ENCODE measurements at regions of chr7 and their contacts with region 1.

Region 1: GRCh38 chr7:80740778-80741545 is 102.5 kb downstream of the CD36 start:
- DNase-seq: peak; percentile 77
- H3K4me3 ChIP-seq: no peak overlapping the region
- H3K27me3 ChIP-seq: no peaks in the 10 kb centered on the region
- CTCF ChIP-seq: no peak

Region 2: DNA sequence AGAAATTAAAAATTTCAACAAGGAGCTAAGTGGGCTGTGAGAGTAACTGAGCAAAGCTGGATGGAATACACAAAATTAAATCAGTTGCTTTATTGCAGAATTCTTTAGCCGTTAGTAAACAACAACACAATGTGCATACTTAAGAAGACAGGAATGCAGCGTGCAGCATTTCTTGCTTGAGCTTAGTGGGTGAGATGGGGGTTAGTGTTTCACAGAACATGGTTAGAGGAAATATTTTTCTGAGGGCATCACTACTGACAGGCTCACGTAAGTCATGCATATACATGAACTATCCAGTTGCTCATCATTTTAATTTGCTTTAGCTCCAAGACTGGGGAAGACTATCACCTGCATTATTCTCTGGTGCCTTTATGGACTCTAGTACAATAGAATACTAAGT is 21.7 kb before region 1 on chr7:
- CTCF ChIA-PET with region 1: no interaction called
- POLR2A ChIA-PET with region 1: no interaction called
- DNase-seq: no peak
- H3K4me3 ChIP-seq: no peak overlapping the region
- H3K27me3 ChIP-seq: no peaks in the 10 kb centered on the region
- CTCF ChIP-seq: no peak

Region 3: DNA sequence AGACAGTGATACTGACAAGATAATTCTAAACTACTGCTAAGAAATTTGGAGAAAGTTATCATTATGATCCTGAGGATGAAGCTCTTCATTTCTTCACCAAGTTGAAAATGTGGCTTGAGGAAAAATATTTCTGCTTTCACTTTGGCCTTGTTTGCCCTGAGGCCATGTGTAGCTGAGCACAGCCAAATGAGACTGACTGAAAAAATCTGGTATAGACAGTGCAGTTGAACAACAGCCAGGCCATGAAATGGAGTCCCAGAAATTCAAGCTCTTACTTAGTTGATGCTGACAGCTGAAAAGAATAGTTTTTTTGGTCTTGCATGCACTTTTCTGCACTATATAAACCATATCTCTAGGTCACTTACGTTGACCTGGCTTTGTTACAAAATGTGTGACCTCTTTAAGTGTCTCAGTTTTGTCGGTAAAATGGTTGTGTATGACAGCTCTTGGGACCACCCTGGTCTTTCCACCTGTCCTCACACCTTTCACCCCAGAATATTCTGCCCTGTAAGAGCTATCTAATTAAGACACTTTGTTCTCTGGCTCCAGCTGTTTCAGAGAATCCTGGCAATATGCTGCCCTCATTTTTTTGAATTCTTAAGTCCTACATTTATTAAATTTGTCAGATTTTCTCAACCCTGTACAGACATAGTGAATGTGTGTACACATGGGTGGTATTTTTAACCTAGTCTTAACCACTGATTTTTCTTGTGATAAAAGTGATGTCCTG is 11.2 kb before region 1 on chr7:
- CTCF ChIA-PET with region 1: interaction called, 3 read pairs
- POLR2A ChIA-PET with region 1: interaction called, 11 read pairs
- DNase-seq: peak; percentile 70
- H3K4me3 ChIP-seq: no peak overlapping the region
- H3K27me3 ChIP-seq: no peaks in the 10 kb centered on the region
- CTCF ChIP-seq: no peak